ENCODE measurements at regions of chr16 and their contacts with region 1.

Region 1: GRCh38 chr16:19523648-19524355 is at the start of gene CCP110:
- DNase-seq: peak; percentile 92
- ATAC-seq: peak; percentile 81
- H3K4me3 Mint-ChIP-seq: peak within 1 kb of the TSS; percentile 99
- H3K27ac Mint-ChIP-seq: peak within 1 kb of the TSS; percentile 97
- H3K4me1 Mint-ChIP-seq: peaks cover 34% of the 10 kb centered on the region
- H3K27me3 Mint-ChIP-seq: no peaks in the 10 kb centered on the region
- total RNA-seq, gene CCP110: 35.2 to 38.1 TPM

Region 2: GRCh38 chr16:19497176-19497575 is 26.6 kb before region 1 on chr16:
- POLR2A ChIA-PET with region 1: no interaction called
- DNase-seq: no peak
- ATAC-seq: no peak
- H3K4me3 Mint-ChIP-seq: no peak overlapping the region
- H3K27ac Mint-ChIP-seq: no peak overlapping the region
- H3K4me1 Mint-ChIP-seq: peaks cover 11% of the 10 kb centered on the region
- H3K27me3 Mint-ChIP-seq: peaks cover 2% of the 10 kb centered on the region

Region 3: DNA sequence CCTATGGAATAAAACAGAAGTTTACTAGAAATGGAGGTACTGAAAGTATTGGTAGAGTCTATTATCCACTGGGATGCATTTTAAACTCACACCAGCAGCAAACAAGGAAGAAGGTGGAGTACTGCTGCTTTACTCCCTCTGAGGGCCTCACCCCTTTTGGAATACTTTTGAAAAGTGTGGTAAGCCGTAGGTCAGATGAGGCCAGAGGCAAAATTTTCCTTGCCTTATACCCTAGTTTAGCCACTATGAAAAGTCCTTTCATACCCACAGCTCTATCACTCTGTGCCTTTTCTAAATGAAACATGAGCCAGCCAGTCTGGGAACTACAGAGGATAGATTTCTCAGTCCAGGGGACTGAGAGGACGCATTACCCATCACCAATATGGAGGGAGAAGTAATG is 15.9 kb before region 1 on chr16:
- POLR2A ChIA-PET with region 1: interaction called, 10 read pairs
- DNase-seq: no peak
- ATAC-seq: no peak
- H3K4me3 Mint-ChIP-seq: no peak overlapping the region
- H3K27ac Mint-ChIP-seq: no peak overlapping the region
- H3K4me1 Mint-ChIP-seq: peaks cover 7% of the 10 kb centered on the region
- H3K27me3 Mint-ChIP-seq: no peaks in the 10 kb centered on the region

Region 4: DNA sequence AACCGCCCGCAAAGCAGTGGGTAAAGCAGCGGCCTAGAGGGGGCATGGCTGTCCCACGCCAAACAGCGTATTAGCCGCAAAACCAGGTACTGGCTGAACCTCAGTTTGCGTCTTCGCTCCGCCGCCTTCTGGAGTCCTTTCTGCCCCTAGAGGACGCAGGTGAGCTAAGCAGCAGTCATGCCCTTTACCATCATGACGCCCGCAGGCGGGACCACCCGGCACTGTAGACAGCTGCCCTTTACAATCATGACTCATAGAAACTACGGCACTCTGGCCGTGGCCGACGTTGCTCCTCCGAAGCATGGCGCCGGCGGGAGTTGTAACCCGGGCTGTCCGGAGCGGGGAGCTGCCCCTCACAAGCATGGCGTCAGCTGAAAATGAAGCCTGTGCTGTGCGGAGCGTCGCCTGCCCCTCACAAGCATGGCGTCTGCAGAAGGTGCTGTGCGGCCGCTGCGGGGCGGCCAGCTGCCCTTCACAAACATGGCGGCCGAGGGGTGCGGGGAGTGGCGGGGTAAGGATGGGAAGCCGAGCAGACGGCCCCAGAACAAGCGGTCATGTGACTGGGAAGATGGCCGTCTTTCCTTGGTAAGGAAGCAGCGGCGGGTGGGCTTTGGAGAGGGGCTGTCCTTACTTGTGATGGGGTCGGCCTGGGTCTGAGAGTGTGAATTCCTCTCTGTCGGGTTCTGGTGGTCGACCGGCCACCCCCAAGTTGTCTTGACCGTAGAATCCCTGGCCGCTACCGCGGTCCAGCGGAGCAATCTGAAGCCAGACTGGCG is 31.5 kb after region 1 on chr16 and contains the start of gene VPS35L:
- POLR2A ChIA-PET with region 1: interaction called, 48 read pairs
- DNase-seq: peak; percentile 94
- ATAC-seq: peak; percentile 98
- H3K4me3 Mint-ChIP-seq: peak within 1 kb of the TSS; percentile 91
- H3K27ac Mint-ChIP-seq: peak within 1 kb of the TSS; percentile 91
- H3K4me1 Mint-ChIP-seq: peaks cover 15% of the 10 kb centered on the region
- H3K27me3 Mint-ChIP-seq: no peaks in the 10 kb centered on the region
- total RNA-seq, gene VPS35L: 50.2 to 55.6 TPM

Region 5: DNA sequence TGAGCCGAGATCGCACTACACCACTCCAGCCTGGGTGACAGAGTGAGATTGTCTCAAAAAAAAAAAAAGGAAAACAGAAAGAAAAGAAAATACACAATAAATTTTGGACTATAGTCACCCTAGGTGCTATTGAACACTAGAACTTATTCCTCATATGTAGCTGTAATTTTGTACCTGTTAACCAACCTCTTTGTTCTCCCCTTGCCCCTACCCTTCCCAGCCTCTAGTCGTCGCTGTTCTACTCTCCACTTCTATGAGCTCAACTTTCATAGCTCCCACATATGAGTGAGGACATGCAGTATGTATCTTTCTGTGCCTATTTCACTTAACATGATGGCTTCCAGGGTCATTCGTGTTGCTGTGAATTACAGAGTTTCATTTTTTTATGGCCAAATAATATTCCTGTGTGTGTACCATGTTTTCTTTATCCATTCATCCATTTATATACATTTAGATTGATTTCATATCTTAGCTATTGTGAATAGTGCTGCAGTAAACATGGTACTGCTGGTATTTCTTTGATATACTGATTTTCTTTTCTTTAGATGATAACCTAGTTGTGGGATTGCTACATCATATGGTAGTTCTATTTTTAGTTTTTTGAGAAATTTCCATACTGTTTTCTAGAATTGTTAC is 60.0 kb after region 1 on chr16:
- POLR2A ChIA-PET with region 1: no interaction called
- DNase-seq: no peak
- ATAC-seq: peak; percentile 65
- H3K4me3 Mint-ChIP-seq: no peak overlapping the region
- H3K27ac Mint-ChIP-seq: no peak overlapping the region
- H3K4me1 Mint-ChIP-seq: no peaks in the 10 kb centered on the region
- H3K27me3 Mint-ChIP-seq: no peaks in the 10 kb centered on the region